Gastrocnemius medialis (tissue), 4 donors: ENCODE measurements at regions of chr2 and their contacts with region 1.

Region 1: GRCh38 chr2:202375609-202376408 is at the start of gene BMPR2:
- DNase-seq: peak; percentile 86 to 91
- ATAC-seq: peak; percentile 78 to 81
- H3K4me3 ChIP-seq: peak within 1 kb of the TSS; percentile 82 to 95 (median 90)
- H3K27ac ChIP-seq: peak within 1 kb of the TSS; percentile 89 to 99 (median 97)
- H3K4me1 ChIP-seq: peaks cover 19 to 22% of the 10 kb centered on the region in 2 donors
- H3K27me3 ChIP-seq: no peaks in the 10 kb centered on the region
- CTCF ChIP-seq: no peak
- POLR2A ChIP-seq: peak; percentile 85 to 92
- total RNA-seq, gene BMPR2: 25.0 to 35.0 (median 27.2) TPM

Region 2: GRCh38 chr2:200864176-200864976 is 1511.4 kb before region 1 on chr2 and contains the start of gene CLK1:
- in situ Hi-C with region 1: no loop called
- intact Hi-C with region 1: loop called (anchors 10 kb)
- DNase-seq: peak; percentile 94 to 96
- ATAC-seq: peak; percentile 81 to 83
- H3K4me3 ChIP-seq: peak within 1 kb of the TSS; percentile 97 to 99 (median 98)
- H3K27ac ChIP-seq: peak within 1 kb of the TSS; percentile 100
- H3K4me1 ChIP-seq: peaks cover 28 to 34% of the 10 kb centered on the region in 2 donors
- H3K27me3 ChIP-seq: no peaks in the 10 kb centered on the region
- CTCF ChIP-seq: peak in 1 of 5 experiments; percentile 18
- POLR2A ChIP-seq: peak; percentile 99
- total RNA-seq, gene CLK1: 61.6 to 104 (median 85.3) TPM

Region 3: GRCh38 chr2:201780674-201781581 is 594.9 kb before region 1 on chr2 and contains the start of gene ALS2:
- in situ Hi-C with region 1: loop called in 1 of 4 experiments (anchors 25 kb)
- intact Hi-C with region 1: no loop called
- DNase-seq: peak; percentile 95 to 98
- ATAC-seq: peak; percentile 99 to 100
- H3K4me3 ChIP-seq: peak within 1 kb of the TSS; percentile 69 to 97 (median 88)
- H3K27ac ChIP-seq: peak within 1 kb of the TSS; percentile 88 to 92 (median 90)
- H3K4me1 ChIP-seq: peaks cover 29 to 31% of the 10 kb centered on the region in 2 donors
- H3K27me3 ChIP-seq: no peaks in the 10 kb centered on the region
- CTCF ChIP-seq: no peak
- POLR2A ChIP-seq: peak; percentile 62 to 67
- total RNA-seq, gene ALS2: 17.1 to 40.6 (median 19.5) TPM

Region 4: DNA sequence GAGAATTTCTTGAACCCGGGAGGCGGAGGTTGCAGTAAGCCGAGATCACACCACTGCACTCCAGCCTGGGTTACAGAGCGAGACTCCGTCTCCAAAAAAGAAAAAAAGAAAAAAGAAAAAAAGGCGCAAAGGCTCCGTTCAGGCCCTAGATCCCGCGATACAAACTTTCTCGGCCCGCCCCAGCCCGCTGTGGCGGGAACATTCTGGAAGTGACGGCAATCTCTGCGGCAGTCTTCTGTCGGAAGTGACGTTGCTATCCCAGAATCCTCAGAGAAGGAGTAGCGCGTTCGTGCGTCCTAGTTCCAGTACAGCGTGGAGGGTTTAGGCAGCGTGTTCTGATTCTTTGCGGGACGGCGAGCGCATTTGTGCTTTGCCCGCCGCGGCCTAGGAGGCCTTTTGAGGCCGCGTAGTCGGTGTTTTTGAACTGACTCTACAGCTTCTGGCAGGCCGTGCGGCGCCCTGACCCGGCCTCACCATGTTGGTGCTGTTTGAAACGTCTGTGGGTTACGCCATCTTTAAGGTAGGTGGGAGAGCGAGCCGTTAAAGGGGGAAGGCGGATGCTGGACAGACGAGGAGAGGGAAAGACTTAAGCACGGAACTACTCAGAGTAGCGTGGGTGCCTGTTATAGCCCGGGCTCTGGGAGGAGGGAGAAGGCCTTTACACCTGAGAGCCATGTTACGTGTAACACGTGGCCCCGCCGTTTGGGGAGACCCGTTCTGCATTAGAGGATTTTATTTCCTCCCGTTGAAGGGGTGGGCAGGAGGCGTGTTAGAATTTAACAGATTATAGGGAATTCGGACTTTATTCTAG is 110.1 kb before region 1 on chr2 and contains the start of gene NOP58:
- in situ Hi-C with region 1: no loop called
- intact Hi-C with region 1: loop called (anchors 5 kb)
- DNase-seq: peak; percentile 91 to 92
- ATAC-seq: peak; percentile 99
- H3K4me3 ChIP-seq: peak within 1 kb of the TSS; percentile 77 to 98 (median 85)
- H3K27ac ChIP-seq: peak within 1 kb of the TSS; percentile 95 to 100 (median 98)
- H3K4me1 ChIP-seq: peaks cover 24 to 25% of the 10 kb centered on the region in 2 donors
- H3K27me3 ChIP-seq: no peaks in the 10 kb centered on the region
- CTCF ChIP-seq: peak in 1 of 5 experiments; percentile 6
- POLR2A ChIP-seq: peak; percentile 98 to 99
- total RNA-seq, gene NOP58: 22.5 to 69.9 (median 31.7) TPM

Region 5: DNA sequence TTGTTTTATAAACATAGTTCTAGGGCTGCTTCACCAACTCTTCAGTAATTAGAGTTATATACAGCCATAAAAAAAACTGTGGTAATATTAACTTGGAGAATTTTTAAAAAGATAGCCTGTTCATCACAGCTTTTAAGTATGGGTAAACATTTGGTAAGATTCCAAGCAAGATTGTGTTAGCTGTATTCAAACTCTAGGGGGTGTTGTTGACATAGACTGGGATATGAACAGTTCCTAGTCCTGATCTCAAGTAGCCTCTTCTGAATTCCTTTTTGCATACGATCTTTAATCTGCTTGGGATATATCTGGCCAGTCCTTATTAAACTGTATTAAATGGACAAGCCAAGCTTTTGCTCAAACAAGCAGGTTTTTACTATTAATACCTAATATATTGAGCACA is 96.9 kb before region 1 on chr2:
- in situ Hi-C with region 1: no loop called
- intact Hi-C with region 1: loop called (anchors 1 kb)
- DNase-seq: no peak
- ATAC-seq: peak; percentile 66 to 79
- H3K4me3 ChIP-seq: no peak overlapping the region
- H3K27ac ChIP-seq: peak overlapping the region; percentile 80 to 94 (median 84)
- H3K4me1 ChIP-seq: peaks cover 20 to 47% of the 10 kb centered on the region in 2 donors
- H3K27me3 ChIP-seq: no peaks in the 10 kb centered on the region
- CTCF ChIP-seq: peak in 4 of 5 experiments; percentile 28 to 62 (median 34)
- POLR2A ChIP-seq: no peak

Region 6: GRCh38 chr2:202299712-202300111 is 76.1 kb before region 1 on chr2:
- in situ Hi-C with region 1: no loop called
- intact Hi-C with region 1: no loop called
- DNase-seq: no peak
- ATAC-seq: no peak
- H3K4me3 ChIP-seq: no peak overlapping the region
- H3K27ac ChIP-seq: no peak overlapping the region
- H3K4me1 ChIP-seq: no peaks in the 10 kb centered on the region
- H3K27me3 ChIP-seq: no peaks in the 10 kb centered on the region
- CTCF ChIP-seq: no peak
- POLR2A ChIP-seq: no peak

Region 7: DNA sequence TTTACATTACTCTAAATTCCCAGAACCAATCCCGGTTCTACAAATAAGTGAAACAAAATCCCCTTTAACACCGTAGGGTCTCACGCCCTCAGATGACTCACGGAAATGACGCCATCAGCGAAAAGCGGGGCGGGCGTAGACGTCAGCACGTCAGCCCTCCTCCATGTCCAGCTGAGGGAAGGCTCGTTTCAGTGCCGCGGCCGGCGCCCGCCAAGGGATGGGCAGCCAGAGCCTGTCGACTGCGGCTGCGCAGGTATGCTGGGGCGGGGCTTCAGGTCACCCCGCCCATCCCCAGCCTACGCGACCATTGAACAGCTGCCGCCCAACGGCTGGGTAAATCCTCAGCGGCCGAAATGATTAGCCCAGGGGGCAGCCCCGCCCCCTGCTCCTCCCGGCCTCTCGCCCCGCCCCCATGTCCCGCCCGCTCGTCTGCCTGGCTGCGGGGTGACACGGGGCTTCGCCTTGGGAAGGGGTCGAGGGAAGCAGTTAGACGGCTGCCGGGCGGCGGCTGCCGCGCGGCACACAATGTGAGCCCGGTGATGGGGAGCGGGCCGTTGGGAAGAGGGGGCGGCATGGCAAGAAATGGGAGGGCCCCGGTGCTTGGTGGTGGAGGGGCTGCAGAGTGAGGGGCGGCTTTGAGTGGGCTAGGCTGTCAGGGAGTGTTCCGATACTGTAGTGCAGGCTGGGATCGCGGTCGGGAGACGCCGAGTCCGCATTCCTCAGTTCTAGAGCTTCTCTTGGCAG is 638.8 kb after region 1 on chr2 and contains the start of gene NBEAL1:
- in situ Hi-C with region 1: no loop called
- intact Hi-C with region 1: loop called (anchors 10 kb)
- DNase-seq: peak; percentile 97 to 98
- ATAC-seq: peak; percentile 94 to 97
- H3K4me3 ChIP-seq: peak within 1 kb of the TSS; percentile 70 to 88 (median 78)
- H3K27ac ChIP-seq: peak within 1 kb of the TSS; percentile 90 to 96 (median 94)
- H3K4me1 ChIP-seq: peaks cover 36 to 42% of the 10 kb centered on the region in 2 donors
- H3K27me3 ChIP-seq: no peaks in the 10 kb centered on the region
- CTCF ChIP-seq: no peak
- POLR2A ChIP-seq: peak; percentile 76 to 86
- total RNA-seq, gene NBEAL1: 9.8 to 21.9 (median 11.3) TPM